Endothelial cell of umbilical vein (primary cell): ENCODE measurements at regions of chr17 and their contacts with region 1.

Region 1: DNA sequence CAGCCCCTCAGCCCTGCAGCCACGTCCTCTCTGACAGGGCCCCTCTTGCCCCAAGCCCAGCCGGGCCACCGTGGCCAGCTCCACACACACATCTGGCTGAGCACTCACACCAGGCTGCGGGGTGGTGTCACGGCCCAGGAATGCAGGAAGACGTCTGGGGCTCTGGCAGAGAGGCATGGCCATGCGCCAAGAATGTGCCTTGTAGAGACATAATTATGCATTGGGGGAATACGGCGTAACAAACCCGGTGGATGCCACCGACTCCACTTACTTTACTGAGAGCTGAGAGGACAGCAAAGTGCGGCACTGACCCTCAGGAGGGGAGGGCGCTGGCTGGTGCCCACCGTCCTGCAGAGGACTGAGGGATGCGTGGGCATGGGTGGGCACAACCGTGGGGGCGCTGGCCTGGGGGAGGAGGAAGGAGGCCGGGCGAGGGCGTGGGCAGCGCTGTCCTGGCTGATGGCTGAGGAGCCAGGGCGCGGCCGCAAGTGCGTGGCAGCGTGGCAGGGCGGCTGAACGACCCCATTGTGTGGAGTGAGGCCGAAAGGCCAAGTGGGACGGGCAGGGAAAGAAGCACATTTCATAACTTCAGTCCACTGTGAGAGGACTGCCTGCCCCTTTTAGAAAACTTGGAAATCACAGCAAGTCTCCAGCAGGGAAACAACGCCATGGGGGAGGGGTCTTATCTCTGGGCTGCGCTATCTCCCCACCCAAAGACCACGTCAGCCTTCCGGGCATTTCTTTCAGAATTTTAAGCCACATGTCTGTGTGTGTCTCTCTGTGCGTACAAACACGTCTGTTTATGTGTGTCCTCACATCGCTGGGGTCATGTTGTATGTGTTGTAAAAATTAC is 30.6 kb downstream of the METRNL start:
- DNase-seq: peak; percentile 88
- H3K4me3 ChIP-seq: peak overlapping the region in 2 of 3 experiments; percentile 15 to 26
- H3K27ac ChIP-seq: peak overlapping the region; percentile 94
- H3K4me1 ChIP-seq: peaks cover 21% of the 10 kb centered on the region
- H3K27me3 ChIP-seq: no peaks in the 10 kb centered on the region
- CTCF ChIP-seq: no peak
- POLR2A ChIP-seq: peak; percentile 90

Region 2: DNA sequence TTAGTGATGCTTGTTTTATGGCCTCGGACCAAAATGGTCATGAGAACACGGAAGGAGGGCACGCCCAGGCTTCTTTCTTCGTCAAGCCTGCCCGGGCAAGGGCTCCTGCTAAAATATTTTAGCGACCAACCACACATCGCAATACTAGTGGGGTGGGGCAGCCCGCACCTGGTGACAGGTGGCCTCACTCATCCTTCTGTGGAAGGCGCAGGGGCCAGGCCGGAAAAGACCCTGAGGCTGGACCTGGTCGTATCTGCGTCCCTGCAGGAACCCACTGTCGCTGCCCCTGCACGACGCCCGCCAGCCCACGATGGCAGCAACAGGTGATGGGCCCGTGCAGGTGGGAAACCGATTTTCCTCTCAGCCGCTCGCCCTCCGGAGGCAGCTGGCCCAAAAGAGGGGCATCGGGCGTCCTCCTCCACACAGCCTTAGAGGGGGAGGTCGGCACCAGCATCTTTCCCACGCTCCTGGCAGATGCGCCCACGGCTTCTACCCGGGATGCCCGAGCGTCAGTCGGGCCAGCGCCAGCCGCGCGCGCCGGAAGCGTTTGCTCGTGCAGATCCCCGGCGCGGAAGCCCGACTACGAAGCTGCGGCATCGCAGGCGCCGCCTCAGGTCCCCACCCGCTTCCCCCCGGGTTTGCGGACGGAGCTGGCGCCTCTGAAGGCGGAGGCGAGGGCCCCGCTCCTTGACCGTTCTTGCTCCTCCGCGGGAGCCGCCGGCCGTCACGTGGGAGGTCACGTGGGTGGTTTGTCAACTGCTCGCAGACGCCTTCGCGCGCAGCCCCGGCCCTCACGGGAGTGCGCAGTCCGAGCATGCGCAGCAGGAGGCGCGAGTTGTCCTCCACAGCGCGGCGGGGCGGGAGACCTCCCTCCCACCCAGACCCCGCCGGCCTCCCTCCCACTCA is 613.2 kb before region 1 on chr17:
- CTCF ChIA-PET with region 1: no interaction called
- POLR2A ChIA-PET with region 1: no interaction called
- dilution Hi-C with region 1: no loop called
- intact Hi-C with region 1: no loop called
- DNase-seq: peak; percentile 93
- H3K4me3 ChIP-seq: peak overlapping the region; percentile 41 to 48 (median 46)
- H3K27ac ChIP-seq: no peak overlapping the region
- H3K4me1 ChIP-seq: peaks cover 8% of the 10 kb centered on the region
- H3K27me3 ChIP-seq: peaks cover 0 to 2% of the 10 kb centered on the region in 2 experiments
- CTCF ChIP-seq: no peak
- POLR2A ChIP-seq: peak; percentile 56

Region 3: DNA sequence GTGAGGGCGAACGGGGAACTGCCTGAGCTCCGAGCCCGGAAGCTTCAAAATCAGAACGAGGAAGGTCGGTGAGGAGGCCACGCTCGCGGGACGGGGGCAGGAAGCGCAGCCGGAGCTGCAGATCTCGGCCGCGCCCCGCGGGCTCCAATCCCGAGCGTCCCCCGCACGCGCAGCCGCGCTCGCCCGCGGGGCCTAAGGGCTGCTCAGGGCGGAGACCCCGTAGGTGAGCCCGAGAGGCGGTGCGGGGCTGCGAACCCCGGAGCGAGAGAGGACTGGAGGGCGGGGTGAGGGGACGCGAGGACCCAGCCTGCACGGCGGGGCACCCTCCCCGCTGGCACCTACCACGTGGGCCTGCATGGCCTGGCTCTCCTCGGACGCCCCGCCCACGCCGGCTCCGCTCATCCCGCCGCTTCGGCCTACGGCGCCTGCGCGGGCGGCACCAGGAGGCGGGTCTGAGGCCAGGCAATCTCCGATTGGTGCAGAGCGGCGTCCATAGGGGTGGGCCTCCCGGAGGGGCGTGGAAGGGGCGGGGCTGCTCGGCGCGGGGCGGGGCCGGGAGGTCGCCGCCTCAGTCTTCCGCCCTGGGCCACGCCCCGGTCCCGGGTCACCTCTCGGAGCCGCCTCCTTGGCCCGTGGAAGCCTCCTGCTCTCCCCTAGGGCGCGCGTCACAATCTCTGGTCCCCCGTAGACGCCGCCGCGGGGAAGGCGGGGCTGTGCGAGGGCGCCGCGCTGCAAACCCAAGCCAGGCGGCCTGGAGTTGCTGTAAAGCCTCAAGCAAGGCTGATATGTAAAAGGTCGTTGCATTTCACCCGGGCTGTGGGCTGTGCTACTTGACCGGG is 58.4 kb before region 1 on chr17:
- CTCF ChIA-PET with region 1: no interaction called
- POLR2A ChIA-PET with region 1: no interaction called
- dilution Hi-C with region 1: no loop called
- intact Hi-C with region 1: loop called (anchors 2 kb)
- DNase-seq: peak; percentile 98
- H3K4me3 ChIP-seq: peak overlapping the region; percentile 3 to 39 (median 18)
- H3K27ac ChIP-seq: peak overlapping the region; percentile 18
- H3K4me1 ChIP-seq: peaks cover 28% of the 10 kb centered on the region
- H3K27me3 ChIP-seq: no peaks in the 10 kb centered on the region
- CTCF ChIP-seq: no peak
- POLR2A ChIP-seq: peak; percentile 86

Region 4: DNA sequence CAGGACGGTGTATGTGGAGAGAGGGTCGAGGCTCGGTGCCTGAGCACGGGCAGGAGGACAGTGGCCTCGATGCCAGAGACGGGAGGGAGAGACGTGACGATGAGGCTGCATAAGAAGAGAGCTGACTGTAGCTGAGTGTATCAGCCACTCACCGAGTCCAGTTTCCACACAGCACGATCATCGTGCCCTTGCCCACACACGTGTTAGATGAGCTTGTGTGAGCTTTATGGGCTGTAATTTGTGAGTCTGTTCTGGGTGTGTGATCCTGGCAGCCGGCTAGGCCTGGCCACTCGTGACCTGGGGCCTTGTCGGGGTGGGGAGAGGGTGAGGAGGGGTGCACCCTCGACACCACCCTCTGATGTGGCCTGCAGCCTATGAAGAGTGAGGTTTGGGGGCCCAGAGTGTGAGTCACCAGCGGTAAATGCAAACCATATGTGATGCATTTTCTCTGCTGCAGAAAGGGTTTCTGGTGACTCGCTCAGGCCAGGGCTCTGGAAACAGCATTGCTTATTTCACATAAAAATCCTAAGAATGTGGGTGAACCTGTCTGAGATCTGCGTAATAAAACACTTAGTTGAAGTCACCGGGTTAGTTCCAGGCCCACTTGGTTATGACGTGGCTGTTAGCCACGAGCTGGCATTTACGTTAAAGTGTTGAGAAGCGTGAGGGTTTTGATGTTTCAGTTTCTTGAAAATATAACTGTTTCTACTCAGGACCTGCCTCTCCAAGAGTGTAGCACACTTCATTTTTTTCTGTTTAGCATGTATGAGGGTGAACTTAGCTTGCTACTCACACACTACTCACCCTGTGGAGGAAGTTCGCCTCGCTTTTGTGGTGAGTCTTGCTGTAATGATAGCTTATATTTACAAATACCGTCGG is 26.5 kb before region 1 on chr17:
- CTCF ChIA-PET with region 1: no interaction called
- POLR2A ChIA-PET with region 1: no interaction called
- dilution Hi-C with region 1: no loop called
- intact Hi-C with region 1: loop called (anchors 2 kb)
- DNase-seq: peak; percentile 51
- H3K4me3 ChIP-seq: no peak overlapping the region
- H3K27ac ChIP-seq: no peak overlapping the region
- H3K4me1 ChIP-seq: peaks cover 19% of the 10 kb centered on the region
- H3K27me3 ChIP-seq: no peaks in the 10 kb centered on the region
- CTCF ChIP-seq: no peak
- POLR2A ChIP-seq: no peak

Region 5: GRCh38 chr17:83125511-83126274 is 15.7 kb after region 1 on chr17:
- CTCF ChIA-PET with region 1: no interaction called
- POLR2A ChIA-PET with region 1: no interaction called
- dilution Hi-C with region 1: no loop called
- intact Hi-C with region 1: no loop called
- DNase-seq: no peak
- H3K4me3 ChIP-seq: no peak overlapping the region
- H3K27ac ChIP-seq: no peak overlapping the region
- H3K4me1 ChIP-seq: no peaks in the 10 kb centered on the region
- H3K27me3 ChIP-seq: no peaks in the 10 kb centered on the region
- CTCF ChIP-seq: no peak
- POLR2A ChIP-seq: no peak

Region 6: GRCh38 chr17:83183951-83184506 is 74.0 kb after region 1 on chr17:
- CTCF ChIA-PET with region 1: no interaction called
- POLR2A ChIA-PET with region 1: no interaction called
- dilution Hi-C with region 1: no loop called
- intact Hi-C with region 1: loop called (anchors 2 kb)
- DNase-seq: peak; percentile 90
- H3K4me3 ChIP-seq: no peak overlapping the region
- H3K27ac ChIP-seq: peak overlapping the region; percentile 41
- H3K4me1 ChIP-seq: peaks cover 11% of the 10 kb centered on the region
- H3K27me3 ChIP-seq: no peaks in the 10 kb centered on the region
- CTCF ChIP-seq: no peak
- POLR2A ChIP-seq: no peak